Transverse colon (tissue), 4 donors: ENCODE measurements at regions of chr20 and their contacts with region 1.

Region 1: DNA sequence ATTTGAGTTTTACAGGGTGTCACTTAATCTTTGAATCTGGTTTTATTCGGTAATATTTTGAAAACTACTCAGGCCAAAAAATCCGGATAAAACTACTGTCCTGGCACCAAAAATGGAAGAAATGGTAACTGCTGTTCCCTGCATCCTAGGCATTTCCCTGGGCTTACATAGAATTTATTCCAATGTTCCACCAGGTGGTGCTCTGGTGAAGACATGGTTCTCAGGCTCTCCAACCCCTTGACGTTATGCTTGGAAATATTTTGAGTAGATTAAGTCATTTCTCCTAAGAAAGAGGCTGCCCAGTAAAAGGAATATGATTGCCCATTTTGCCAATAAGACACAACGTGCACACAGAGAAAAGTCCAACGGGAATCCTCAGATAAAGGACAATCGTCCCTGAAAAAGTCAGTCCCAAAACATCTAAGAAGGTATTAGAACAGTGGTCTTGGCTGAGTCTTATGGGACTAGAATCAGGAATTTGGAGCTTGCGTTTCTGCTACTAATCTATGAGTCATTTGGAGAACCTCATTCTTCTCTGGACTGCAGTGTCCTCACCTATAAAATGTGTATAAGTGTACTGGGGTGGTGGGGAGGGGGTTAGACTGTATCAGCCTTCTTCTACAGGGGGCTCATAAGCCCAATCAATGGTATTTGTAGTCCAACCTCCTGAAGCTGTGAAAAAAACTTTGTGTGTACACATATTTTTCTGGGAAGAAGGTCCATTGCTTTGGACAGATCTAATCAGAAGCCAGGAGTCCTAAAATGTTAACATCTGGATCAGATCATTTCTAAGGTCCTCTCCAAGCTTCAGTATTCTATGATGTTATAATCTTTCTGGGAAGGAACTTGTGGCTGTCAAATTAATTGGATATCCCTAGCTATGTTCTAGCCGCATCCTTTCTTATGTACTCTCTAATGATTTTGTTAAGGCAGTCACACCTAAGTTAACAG is 131.0 kb upstream of the BMP2 start:
- DNase-seq: peak; percentile 31
- H3K4me3 ChIP-seq: no peak overlapping the region
- H3K27ac ChIP-seq: peak overlapping the region in 1 of 4 donors; percentile 7
- H3K4me1 ChIP-seq: peaks cover 0 to 20% (median 5%) of the 10 kb centered on the region in 4 donors
- H3K27me3 ChIP-seq: no peaks in the 10 kb centered on the region
- CTCF ChIP-seq: peak; percentile 50 to 75 (median 57)
- EP300 ChIP-seq: no peak
- POLR2A ChIP-seq: no peak

Region 2: GRCh38 chr20:6746901-6747609 is 110.6 kb after region 1 on chr20:
- in situ Hi-C with region 1: loop called in 1 of 4 experiments (anchors 25 kb)
- intact Hi-C with region 1: no loop called
- DNase-seq: no peak
- H3K4me3 ChIP-seq: no peak overlapping the region
- H3K27ac ChIP-seq: no peak overlapping the region
- H3K4me1 ChIP-seq: no peaks in the 10 kb centered on the region
- H3K27me3 ChIP-seq: no peaks in the 10 kb centered on the region
- CTCF ChIP-seq: no peak
- EP300 ChIP-seq: no peak
- POLR2A ChIP-seq: no peak

Region 3: GRCh38 chr20:6767536-6768227 is 131.2 kb after region 1 on chr20 and contains the start of gene BMP2:
- in situ Hi-C with region 1: loop called in 2 of 4 experiments (anchors 10 kb)
- intact Hi-C with region 1: no loop called
- DNase-seq: peak; percentile 72
- H3K4me3 ChIP-seq: peak within 1 kb of the TSS; percentile 65 to 74 (median 70)
- H3K27ac ChIP-seq: peak within 1 kb of the TSS; percentile 83 to 91 (median 86)
- H3K4me1 ChIP-seq: peaks cover 0 to 36% (median 16%) of the 10 kb centered on the region in 4 donors
- H3K27me3 ChIP-seq: peaks cover 4% of the 10 kb centered on the region
- CTCF ChIP-seq: no peak
- EP300 ChIP-seq: no peak
- POLR2A ChIP-seq: no peak
- total RNA-seq, gene BMP2: 16.7 to 109 (median 48.4) TPM

Region 4: DNA sequence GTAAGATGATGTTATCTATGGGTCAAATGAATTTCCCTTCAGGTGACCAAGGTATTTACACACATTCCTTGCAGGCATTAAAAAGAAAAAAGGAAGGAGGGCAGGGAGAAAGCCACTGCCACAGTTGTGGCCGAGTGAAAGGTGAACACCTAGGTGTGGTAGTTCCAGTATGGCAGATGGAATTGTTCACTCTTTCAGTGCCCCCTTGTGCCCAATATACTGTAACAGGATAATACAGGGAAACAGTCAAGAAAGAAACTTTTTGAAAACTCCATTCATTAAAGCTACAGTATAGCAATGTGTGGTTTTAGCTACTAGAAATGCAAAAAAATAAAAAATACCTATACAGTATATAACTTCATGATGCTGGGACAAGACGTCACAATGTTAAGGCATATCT is 183.1 kb after region 1 on chr20:
- in situ Hi-C with region 1: loop called in 1 of 4 experiments (anchors 25 kb)
- intact Hi-C with region 1: no loop called
- DNase-seq: peak; percentile 19
- H3K4me3 ChIP-seq: no peak overlapping the region
- H3K27ac ChIP-seq: no peak overlapping the region
- H3K4me1 ChIP-seq: no peaks in the 10 kb centered on the region
- H3K27me3 ChIP-seq: no peaks in the 10 kb centered on the region
- CTCF ChIP-seq: peak; percentile 29 to 65 (median 38)
- EP300 ChIP-seq: no peak
- POLR2A ChIP-seq: no peak